Posterior vena cava (tissue), 2 donors: ENCODE measurements at regions of chr18 and their contacts with region 1.

Region 1: DNA sequence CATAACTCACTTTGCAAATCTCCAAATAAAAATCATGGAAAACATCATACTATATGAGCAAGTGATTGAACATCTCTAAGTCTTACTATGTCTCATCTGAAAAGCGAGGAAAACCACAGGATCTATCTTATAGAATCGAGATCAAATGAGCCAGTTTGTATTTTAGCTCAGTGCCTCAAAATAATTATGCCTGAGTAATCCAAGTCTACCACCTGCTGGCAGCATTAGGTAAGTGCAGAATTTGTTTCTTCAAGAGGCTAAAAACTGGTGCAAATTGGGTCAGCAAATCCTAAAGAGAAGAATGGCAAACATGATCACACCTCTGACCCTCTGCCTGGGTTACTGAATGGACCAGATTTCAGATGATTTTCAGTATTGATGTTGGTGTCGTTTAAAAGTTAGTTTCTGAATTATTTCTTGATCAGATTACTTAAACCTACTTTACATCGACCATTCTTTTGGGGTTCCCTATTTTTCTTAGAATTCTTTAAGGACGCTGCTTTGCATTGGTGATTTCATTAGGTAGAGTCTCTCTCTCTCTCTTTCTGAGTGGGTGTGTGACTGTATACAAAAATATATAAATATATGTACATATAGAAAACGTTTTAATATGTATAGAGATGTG is 12.7 kb upstream of the FHOD3 start:
- DNase-seq: no peak

Region 2: DNA sequence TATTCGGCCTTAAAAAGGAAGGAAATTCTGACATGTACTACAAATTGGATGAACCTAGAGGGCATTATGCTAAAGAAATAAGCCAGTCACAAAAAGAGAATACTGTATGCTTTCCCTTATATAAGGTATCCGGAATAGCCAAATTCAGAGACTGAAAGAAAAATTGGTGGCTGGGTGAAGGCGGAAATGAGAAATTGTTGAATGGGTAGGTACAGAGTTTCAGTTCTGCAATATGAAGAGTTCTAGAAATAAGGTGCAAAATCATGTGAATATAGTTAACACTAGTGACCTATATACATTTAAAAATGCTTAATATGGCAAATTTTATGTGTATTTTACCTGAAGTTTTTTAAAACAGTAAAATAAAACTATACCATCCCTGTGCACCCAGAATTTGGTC is 269.2 kb before region 1 on chr18:
- intact Hi-C with region 1: loop called (anchors 2 to 5 kb)
- DNase-seq: no peak

Region 3: DNA sequence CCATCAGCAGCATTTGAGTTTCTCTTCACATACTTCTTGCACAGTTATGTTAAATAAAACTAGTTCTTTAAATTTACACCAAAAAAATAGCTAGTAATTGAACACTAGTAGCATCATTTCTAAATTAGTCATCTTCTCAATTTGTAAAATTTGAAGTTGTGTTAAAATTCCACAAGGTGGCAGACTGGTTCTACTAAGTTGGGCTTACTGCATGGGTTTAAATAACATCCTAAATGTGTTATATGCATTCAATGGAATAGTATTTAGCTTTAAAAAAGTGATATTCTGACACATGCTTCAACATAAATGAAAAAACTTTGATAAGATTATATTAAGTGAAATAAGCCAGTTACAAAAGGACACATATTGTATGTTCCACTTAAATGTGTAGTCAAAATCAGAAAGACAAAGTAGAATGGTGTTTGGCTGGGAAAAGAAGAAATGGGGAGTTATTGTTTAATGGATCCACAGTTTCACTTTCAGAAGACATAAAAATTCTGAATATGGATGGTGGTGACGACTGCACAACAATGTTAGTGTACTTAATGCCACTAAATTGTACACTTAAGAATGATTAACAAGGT is 188.8 kb before region 1 on chr18:
- intact Hi-C with region 1: loop called (anchors 10 kb)
- DNase-seq: no peak

Region 4: DNA sequence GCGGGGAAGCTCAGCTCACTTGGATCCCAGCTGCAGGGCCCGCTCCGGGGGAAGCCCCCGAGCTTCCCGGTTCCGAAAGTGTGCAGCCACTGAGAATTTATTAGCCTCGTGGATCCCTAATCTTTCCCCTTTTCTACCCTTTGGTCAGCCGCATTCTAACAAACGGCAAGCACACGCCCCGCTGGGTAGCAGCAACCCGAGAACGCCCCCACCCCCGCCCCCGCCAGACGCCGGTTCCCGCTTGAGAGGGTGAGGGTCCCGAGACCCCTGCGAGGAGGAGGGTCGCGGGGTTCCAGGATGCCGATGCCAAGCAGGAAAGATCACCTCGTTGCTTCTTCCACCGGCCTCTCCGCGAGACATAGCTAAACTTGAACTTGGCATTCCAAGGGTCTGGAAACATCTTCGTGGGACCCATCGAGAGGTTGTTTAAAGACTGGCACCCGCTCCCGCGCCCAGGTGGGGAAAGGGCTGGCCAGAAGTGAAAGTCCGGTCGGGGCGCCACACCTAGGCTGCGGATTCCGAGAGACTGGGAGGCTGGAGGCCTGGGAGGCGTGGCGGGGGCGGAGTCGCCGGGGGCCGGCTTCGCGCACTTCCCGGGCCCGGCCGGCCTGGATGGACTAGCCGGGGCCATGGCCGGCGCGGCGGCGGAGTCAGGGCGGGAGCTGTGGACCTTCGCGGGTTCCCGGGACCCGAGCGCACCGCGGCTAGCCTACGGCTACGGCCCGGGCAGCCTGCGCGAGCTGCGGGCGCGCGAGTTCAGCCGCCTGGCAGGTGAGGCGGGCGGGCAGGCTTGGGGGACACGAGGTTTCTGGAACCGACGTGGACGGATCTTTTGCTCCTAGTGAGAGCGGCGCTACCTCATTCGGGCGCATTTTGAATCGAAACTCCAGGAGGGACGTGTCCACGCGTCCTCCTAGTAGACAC is 97.6 kb before region 1 on chr18 and contains the start of gene MOCOS:
- intact Hi-C with region 1: loop called in 1 of 2 experiments (anchors 10 kb)
- DNase-seq: peak; percentile 89
- total RNA-seq, gene MOCOS: 1.2 to 1.3 TPM